Posterior vena cava (tissue), 2 donors: ENCODE measurements at regions of chr15 and their contacts with region 1.

Region 1: GRCh38 chr15:57861036-57861638 is 154.6 kb downstream of the POLR2M start:
- DNase-seq: no peak

Region 2: DNA sequence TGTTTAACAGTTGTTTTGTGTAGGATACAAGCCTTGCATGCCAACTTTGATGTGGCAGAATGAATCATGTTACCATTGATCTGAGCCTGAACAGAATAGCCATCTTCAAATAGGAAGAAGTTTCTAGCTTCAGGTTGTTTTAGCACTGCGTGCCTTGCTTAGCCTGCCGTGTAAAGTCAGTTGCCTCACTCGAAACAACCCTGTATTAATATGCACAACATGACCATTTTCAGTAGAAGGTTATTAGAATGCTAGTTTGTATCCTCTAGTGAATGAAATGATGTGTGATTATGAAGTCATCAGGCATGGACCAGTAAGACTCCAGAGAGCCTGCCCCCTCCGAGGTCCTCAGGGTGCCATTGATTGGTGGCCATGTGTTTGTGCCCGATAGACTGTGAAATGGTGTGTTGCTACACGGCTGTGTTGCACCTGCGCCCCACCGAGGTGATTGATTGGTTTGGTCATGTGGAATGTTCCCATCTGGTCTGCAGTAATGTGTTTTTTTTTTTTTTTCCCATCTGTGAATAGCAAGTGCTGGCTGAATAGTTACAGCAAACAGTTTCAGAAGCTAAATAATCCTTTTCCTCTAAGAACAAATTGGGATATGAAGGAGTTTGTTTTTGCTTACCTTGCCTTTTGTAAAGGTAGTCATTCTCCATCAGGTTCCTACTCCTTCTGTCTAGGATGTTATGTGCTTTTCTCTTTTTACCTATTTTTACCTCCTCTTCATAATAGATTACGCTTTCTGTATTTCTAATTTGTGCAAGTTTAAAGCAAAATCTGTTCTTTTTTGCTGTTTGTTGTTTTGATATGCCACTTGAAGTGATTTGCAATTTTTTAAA is 727.8 kb before region 1 on chr15:
- intact Hi-C with region 1: no loop called
- DNase-seq: no peak

Region 3: GRCh38 chr15:57561041-57561711 is 300.0 kb before region 1 on chr15:
- intact Hi-C with region 1: loop called in 1 of 2 experiments (anchors 5 kb)
- DNase-seq: no peak

Region 4: GRCh38 chr15:57675481-57676181 is 185.5 kb before region 1 on chr15:
- intact Hi-C with region 1: loop called in 1 of 2 experiments (anchors 10 kb)
- DNase-seq: no peak

Region 5: DNA sequence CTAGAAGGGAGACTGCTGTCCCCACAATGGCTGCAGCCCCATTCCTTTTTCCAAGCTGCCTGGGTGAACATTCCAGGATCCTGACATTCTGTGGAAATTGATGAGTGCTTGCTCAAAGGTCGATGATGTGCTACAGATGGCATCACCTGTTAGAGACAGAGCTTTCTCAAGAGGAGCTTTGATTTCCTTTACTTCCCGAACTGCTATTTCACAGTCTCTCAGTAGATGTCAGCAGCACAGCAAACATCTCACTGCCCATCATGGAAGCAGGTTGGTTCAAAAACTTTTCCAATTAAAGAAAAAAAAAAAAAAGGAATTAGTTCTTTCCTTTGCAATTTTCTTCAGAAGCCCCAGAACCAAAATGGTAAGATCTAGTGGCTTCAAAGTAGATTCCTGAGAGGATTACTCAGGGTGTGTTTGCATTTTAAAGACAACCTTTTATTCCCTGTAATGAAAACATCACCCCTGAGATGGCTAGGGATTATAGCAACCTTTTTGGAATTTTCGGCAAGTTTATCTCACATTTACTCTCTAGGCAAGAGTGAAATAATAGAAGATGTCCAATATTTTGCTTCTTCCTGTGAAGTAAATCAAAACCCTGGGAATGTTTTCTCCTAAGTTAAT is 109.8 kb before region 1 on chr15:
- intact Hi-C with region 1: loop called in 1 of 2 experiments (anchors 10 kb)
- DNase-seq: no peak

Region 6: GRCh38 chr15:58066042-58066867 is 205.1 kb after region 1 on chr15:
- intact Hi-C with region 1: loop called (anchors 5 kb)
- DNase-seq: peak; percentile 89